ENCODE measurements at regions of chr11 and their contacts with region 1.

Region 1: GRCh38 chr11:9757809-9758636 is 94.1 kb downstream of the SWAP70 start:
- DNase-seq: peak; percentile 96
- ATAC-seq: peak; percentile 59
- H3K4me3 Mint-ChIP-seq: peak overlapping the region; percentile 87
- H3K27ac Mint-ChIP-seq: peak overlapping the region; percentile 98
- H3K4me1 Mint-ChIP-seq: peaks cover 81% of the 10 kb centered on the region
- H3K27me3 Mint-ChIP-seq: no peaks in the 10 kb centered on the region
- CTCF ChIP-seq: peak; percentile 47

Region 2: GRCh38 chr11:9314291-9315036 is 443.6 kb before region 1 on chr11 and contains the start of gene TMEM41B:
- CTCF ChIA-PET with region 1: no interaction called
- POLR2A ChIA-PET with region 1: no interaction called
- intact Hi-C with region 1: loop called (anchors 2 kb)
- DNase-seq: peak; percentile 100
- ATAC-seq: peak; percentile 96
- H3K4me3 Mint-ChIP-seq: peak within 1 kb of the TSS; percentile 98
- H3K27ac Mint-ChIP-seq: peak within 1 kb of the TSS; percentile 95
- H3K4me1 Mint-ChIP-seq: peaks cover 49% of the 10 kb centered on the region
- H3K27me3 Mint-ChIP-seq: peaks cover 4% of the 10 kb centered on the region
- CTCF ChIP-seq: no peak
- total RNA-seq, gene TMEM41B: 19.4 and 21.7 TPM in 2 replicates

Region 3: DNA sequence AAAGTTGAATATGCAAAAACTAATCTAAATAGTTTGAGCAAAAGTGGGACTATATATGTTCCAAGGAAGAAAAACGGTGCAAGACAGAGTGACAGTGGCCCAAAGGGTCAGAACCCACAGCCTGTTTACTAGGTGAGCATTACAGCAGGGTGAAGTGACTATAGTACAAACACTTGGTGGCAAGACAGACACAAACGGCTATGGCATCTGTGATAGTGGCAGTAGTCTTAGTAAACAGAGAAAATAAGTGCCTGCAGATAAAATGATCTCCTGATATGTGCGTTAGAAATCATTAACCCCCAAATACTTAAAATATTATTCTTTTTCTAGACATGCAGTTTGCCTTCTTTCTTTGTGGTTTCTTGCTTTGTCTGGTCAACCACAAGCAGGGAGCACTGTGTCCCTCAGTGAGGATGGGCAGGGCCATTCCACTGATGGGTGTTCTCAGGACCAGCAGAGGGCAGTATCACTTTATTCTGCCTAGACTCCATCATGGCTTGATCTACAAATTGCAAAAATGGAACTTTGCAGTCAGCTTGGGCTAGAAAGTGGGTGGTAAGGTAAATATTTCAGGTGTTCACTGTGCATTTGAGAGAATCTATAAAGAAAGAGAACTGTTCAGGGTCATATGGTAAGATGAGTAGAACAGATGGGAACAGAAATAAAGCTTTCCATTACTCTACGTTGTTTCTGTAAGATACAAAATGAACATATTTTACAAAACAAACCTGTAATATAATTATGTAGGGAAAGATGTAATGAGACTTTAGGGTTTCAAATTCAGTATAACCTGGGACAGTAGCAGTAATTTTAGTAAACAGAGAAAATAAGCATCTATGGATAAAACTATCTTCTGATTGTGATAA is 104.1 kb after region 1 on chr11:
- CTCF ChIA-PET with region 1: interaction called, 8 read pairs
- POLR2A ChIA-PET with region 1: interaction called, 10 read pairs
- intact Hi-C with region 1: loop called (anchors 2 kb)
- DNase-seq: no peak
- ATAC-seq: peak; percentile 82
- H3K4me3 Mint-ChIP-seq: no peak overlapping the region
- H3K27ac Mint-ChIP-seq: no peak overlapping the region
- H3K4me1 Mint-ChIP-seq: peaks cover 31% of the 10 kb centered on the region
- H3K27me3 Mint-ChIP-seq: no peaks in the 10 kb centered on the region
- CTCF ChIP-seq: no peak

Region 4: DNA sequence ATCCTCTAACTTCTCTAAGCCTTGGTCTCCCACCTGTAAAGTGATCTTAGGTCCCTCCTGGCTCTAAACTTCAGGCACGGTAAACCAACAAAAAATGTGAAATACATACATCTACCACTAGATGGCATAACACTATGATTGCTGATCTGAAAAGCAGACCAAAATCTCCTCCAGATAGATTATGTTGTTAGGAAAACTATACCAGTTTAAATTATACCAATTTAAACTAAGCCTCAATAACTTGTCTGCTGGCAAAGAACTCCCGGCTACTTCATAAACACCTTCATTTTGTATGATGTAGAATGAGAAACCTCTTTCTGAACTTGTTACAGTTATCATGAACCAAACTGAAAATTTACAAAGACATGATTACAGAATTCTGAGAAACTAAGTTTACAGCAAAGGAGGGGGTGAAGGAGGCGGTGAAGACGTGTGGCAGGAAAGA is 450.1 kb after region 1 on chr11:
- CTCF ChIA-PET with region 1: no interaction called
- POLR2A ChIA-PET with region 1: no interaction called
- intact Hi-C with region 1: loop called (anchors 2 kb)
- DNase-seq: no peak
- ATAC-seq: peak; percentile 37
- H3K4me3 Mint-ChIP-seq: no peak overlapping the region
- H3K27ac Mint-ChIP-seq: no peak overlapping the region
- H3K4me1 Mint-ChIP-seq: no peaks in the 10 kb centered on the region
- H3K27me3 Mint-ChIP-seq: no peaks in the 10 kb centered on the region
- CTCF ChIP-seq: peak; percentile 31

Region 5: DNA sequence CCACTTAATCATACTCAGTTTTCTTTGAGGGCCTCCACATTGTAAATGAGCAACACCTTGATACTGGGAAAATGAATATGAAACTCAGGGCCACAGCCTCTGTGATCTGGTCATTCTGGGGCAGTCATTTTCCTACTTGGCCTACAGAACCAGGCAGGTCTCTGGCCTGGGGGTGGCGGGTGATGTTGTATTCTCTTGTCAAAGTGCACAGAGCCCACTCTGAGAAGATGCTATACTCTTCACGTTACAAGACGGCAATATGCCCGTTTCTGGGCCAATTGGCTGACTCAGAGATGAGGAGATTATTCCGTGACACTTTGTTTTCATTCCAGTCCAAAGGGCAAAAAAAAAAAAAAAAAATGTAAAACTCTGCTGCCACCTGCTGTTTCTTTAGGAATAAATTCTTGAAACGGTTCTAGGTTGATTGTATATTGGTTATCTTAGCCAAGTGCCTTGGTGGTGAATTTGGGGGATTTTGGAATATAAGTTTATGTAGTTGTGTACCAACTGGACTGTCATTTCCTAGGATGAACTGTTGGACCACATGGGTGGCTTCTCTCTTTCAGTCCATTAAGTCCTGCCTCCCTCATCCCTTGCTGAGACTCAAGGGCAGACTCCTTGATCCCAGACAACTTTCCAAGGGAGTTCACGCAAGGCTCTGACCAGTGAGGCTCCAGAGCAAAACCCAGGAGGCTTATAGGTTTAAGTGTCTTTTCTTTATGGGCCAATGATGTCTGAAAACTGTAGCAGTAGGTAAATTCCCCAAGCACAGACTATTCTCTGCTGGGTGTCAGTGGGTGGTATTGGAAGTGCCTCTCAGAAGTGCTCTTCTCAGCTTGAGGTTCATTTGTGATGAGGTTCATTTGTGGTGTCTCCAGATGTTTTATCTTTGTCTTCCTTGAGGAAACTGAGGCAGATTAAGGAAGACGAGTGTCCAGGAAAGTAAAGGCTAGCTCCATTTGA is 565.1 kb after region 1 on chr11:
- CTCF ChIA-PET with region 1: interaction called, 26 read pairs
- POLR2A ChIA-PET with region 1: interaction called, 11 read pairs
- intact Hi-C with region 1: loop called (anchors 1 kb)
- DNase-seq: no peak
- ATAC-seq: peak; percentile 69
- H3K4me3 Mint-ChIP-seq: no peak overlapping the region
- H3K27ac Mint-ChIP-seq: peak overlapping the region; percentile 67
- H3K4me1 Mint-ChIP-seq: peaks cover 14% of the 10 kb centered on the region
- H3K27me3 Mint-ChIP-seq: peaks cover 11% of the 10 kb centered on the region
- CTCF ChIP-seq: no peak